A549 (cell line): ENCODE measurements at regions of chr5 and their contacts with region 1.

Region 1: GRCh38 chr5:138352071-138352721 is at the start of gene KDM3B:
- DNase-seq: peak; percentile 87 to 94
- ATAC-seq: peak; percentile 60 to 76
- H3K4me3 ChIP-seq: peak within 1 kb of the TSS; percentile 99
- H3K27ac ChIP-seq: peak within 1 kb of the TSS; percentile 96 to 100
- H3K4me1 ChIP-seq: peaks cover 19% of the 10 kb centered on the region
- CTCF ChIP-seq: peak; percentile 99
- EP300 ChIP-seq: no peak
- POLR2A ChIP-seq: no peak
- RAD21 ChIP-seq: peak; percentile 21 to 31; a peak in 2 of 5 replicates
- polyA plus RNA-seq, gene KDM3B: 50.6 and 52.5 TPM in 2 replicates

Region 2: GRCh38 chr5:138213161-138214029 is 138.8 kb before region 1 on chr5 and contains the start of gene CDC23:
- CTCF ChIA-PET with region 1: interaction called, 12 read pairs
- POLR2A ChIA-PET with region 1: interaction called, 10 read pairs
- DNase-seq: peak; percentile 99 to 100
- ATAC-seq: peak; percentile 98 to 99
- H3K4me3 ChIP-seq: peak within 1 kb of the TSS; percentile 85
- H3K27ac ChIP-seq: peak within 1 kb of the TSS; percentile 80 to 91
- H3K4me1 ChIP-seq: peaks cover 6% of the 10 kb centered on the region; the same call in 2 of the 3 replicates
- CTCF ChIP-seq: no peak
- EP300 ChIP-seq: no peak
- POLR2A ChIP-seq: peak; percentile 60
- RAD21 ChIP-seq: no peak
- polyA plus RNA-seq, gene CDC23: 61.7 and 70.3 TPM in 2 replicates

Region 3: GRCh38 chr5:138316355-138316754 is 35.8 kb before region 1 on chr5:
- CTCF ChIA-PET with region 1: interaction called, 21 read pairs
- POLR2A ChIA-PET with region 1: no interaction called
- DNase-seq: no peak
- ATAC-seq: peak; percentile 13 to 69; a peak in 4 of 6 replicates
- H3K4me3 ChIP-seq: no peak overlapping the region
- H3K27ac ChIP-seq: no peak overlapping the region
- H3K4me1 ChIP-seq: no peaks in the 10 kb centered on the region
- CTCF ChIP-seq: no peak
- EP300 ChIP-seq: no peak
- POLR2A ChIP-seq: no peak
- RAD21 ChIP-seq: no peak

Region 4: GRCh38 chr5:138337685-138338410 is 14.3 kb before region 1 on chr5 and contains the start of gene FAM53C:
- CTCF ChIA-PET with region 1: interaction called, 197 read pairs
- POLR2A ChIA-PET with region 1: interaction called, 68 read pairs
- DNase-seq: peak; percentile 84 to 93
- ATAC-seq: peak; percentile 88 to 95
- H3K4me3 ChIP-seq: peak within 1 kb of the TSS; percentile 82
- H3K27ac ChIP-seq: peak within 1 kb of the TSS; percentile 92 to 99
- H3K4me1 ChIP-seq: peaks cover 26% of the 10 kb centered on the region; the same call in 2 of the 3 replicates
- CTCF ChIP-seq: no peak
- EP300 ChIP-seq: no peak
- POLR2A ChIP-seq: peak; percentile 100
- RAD21 ChIP-seq: no peak; a peak in 1 of 5 replicates
- polyA plus RNA-seq, gene FAM53C: 24.5 and 24.9 TPM in 2 replicates

Region 5: GRCh38 chr5:138402640-138403039 is 50.4 kb after region 1 on chr5:
- CTCF ChIA-PET with region 1: interaction called, 14 read pairs
- POLR2A ChIA-PET with region 1: no interaction called
- DNase-seq: no peak
- ATAC-seq: no peak
- H3K4me3 ChIP-seq: no peak overlapping the region
- H3K27ac ChIP-seq: no peak overlapping the region
- H3K4me1 ChIP-seq: no peaks in the 10 kb centered on the region
- CTCF ChIP-seq: no peak
- EP300 ChIP-seq: no peak
- POLR2A ChIP-seq: no peak
- RAD21 ChIP-seq: no peak

Region 6: DNA sequence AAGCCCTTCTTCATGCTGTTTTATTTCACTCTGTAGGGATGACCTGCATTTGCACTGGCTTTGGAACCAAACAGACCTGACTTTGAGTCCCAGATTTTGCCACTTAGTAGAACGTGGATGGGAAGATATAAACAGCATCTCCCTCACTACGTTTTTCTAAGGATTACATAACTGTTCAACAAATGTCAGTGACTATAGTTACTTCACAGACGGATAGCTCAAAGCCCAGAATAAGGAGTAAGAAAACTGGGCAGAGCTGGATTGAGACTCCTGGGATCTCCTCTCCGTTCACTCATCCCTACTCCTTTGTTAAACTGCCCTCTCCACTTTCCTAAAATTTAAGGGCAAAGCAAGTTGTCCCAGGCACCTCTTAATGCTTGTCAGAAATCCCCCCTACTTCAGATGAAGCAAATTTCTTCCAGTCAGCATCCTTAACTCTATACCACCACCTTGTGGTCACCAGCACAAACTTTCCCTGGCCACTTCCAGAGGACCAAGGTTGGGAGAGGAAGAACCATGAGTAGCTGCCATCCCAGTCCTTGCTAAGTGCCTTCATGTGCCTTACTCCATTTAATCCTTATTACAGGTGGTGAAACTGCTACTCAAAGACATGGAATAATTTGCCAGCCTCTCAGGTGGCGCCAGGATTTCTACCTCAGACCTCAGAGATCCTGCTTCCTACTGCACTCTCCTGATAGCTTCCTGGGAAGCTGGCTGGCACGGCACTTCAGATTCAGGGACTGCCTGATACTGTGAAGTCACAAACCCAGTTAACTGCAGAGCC is 151.5 kb after region 1 on chr5:
- CTCF ChIA-PET with region 1: interaction called, 12 read pairs
- POLR2A ChIA-PET with region 1: interaction called, 3 read pairs
- DNase-seq: peak; percentile 67 to 86
- ATAC-seq: peak; percentile 71 to 82
- H3K4me3 ChIP-seq: no peak overlapping the region
- H3K27ac ChIP-seq: no peak overlapping the region
- H3K4me1 ChIP-seq: peaks cover 29% of the 10 kb centered on the region; the same call in 2 of the 3 replicates
- CTCF ChIP-seq: peak; percentile 84
- EP300 ChIP-seq: no peak
- POLR2A ChIP-seq: no peak
- RAD21 ChIP-seq: peak; percentile 73 to 76